Caco-2 (cell line): ENCODE measurements at regions of chr4 and their contacts with region 1.

Region 1: GRCh38 chr4:1746265-1746691 is 25.0 kb downstream of the TACC3 start:
- DNase-seq: peak; percentile 80 to 89
- H3K4me3 ChIP-seq: no peak overlapping the region
- H3K4me3 Mint-ChIP-seq: no peak overlapping the region
- H3K27ac Mint-ChIP-seq: no peak overlapping the region
- H3K4me1 ChIP-seq: 0 out of 2 replicates have a peak, but pooled peaks cover 5% of the 10 kb centered on the region
- H3K4me1 Mint-ChIP-seq: no peaks in the 10 kb centered on the region
- H3K27me3 ChIP-seq: no peaks in the 10 kb centered on the region
- H3K27me3 Mint-ChIP-seq: no peaks in the 10 kb centered on the region
- CTCF ChIP-seq: peak; percentile 66 to 85

Region 2: GRCh38 chr4:1727117-1728031 is 18.9 kb before region 1 on chr4:
- CTCF ChIA-PET with region 1: no interaction called
- POLR2A ChIA-PET with region 1: no interaction called
- intact Hi-C with region 1: no loop called
- DNase-seq: no peak
- H3K4me3 ChIP-seq: no peak overlapping the region
- H3K4me3 Mint-ChIP-seq: no peak overlapping the region
- H3K27ac Mint-ChIP-seq: no peak overlapping the region
- H3K4me1 ChIP-seq: peaks cover 6% of the 10 kb centered on the region; the same call in 1 of the 2 replicates
- H3K4me1 Mint-ChIP-seq: peaks cover 8% of the 10 kb centered on the region
- H3K27me3 ChIP-seq: no peaks in the 10 kb centered on the region
- H3K27me3 Mint-ChIP-seq: no peaks in the 10 kb centered on the region
- CTCF ChIP-seq: no peak

Region 3: DNA sequence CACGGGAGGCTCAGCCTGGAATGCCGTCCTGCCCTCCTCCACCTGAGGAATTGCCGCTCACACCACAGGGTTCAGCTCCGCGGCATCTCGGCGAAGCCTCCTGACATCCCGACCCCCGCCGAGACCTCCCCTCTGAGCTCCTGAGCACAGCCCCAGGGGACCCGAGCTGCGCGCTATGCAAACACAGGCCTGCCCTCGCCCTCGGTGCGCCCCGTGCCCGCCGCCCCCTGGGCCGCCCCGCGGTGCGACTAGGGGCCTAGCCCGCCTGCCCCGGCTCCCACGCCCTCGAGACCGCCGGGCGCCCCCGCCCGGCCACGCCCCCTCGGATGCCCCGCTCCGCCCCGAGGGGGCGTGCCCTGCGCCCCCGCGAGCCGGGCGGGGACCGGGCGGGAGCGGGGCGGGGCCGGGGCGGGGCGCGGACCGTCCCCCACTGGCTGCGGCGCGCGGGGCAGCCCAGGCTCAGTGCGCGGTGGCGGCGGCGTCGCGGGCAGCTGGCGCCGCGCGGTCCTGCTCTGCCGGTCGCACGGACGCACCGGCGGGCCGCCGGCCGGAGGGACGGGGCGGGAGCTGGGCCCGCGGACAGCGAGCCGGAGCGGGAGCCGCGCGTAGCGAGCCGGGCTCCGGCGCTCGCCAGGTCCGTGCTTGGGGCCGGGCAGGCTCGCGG is 46.7 kb after region 1 on chr4 and contains the start of gene FGFR3:
- CTCF ChIA-PET with region 1: interaction called, 11 read pairs
- POLR2A ChIA-PET with region 1: interaction called, 6 read pairs
- intact Hi-C with region 1: no loop called
- DNase-seq: peak; percentile 80 to 83
- H3K4me3 ChIP-seq: peak within 1 kb of the TSS; percentile 73
- H3K4me3 Mint-ChIP-seq: peak within 1 kb of the TSS; percentile 68
- H3K27ac Mint-ChIP-seq: no peak within 1 kb of the TSS
- H3K4me1 ChIP-seq: peaks cover 34% of the 10 kb centered on the region
- H3K4me1 Mint-ChIP-seq: peaks cover 6% of the 10 kb centered on the region
- H3K27me3 ChIP-seq: no peaks in the 10 kb centered on the region
- H3K27me3 Mint-ChIP-seq: no peaks in the 10 kb centered on the region
- CTCF ChIP-seq: no peak
- total RNA-seq, gene FGFR3: 112 and 132 TPM in 2 replicates

Region 4: GRCh38 chr4:1809754-1810511 is 63.7 kb after region 1 on chr4:
- CTCF ChIA-PET with region 1: interaction called, 23 read pairs
- POLR2A ChIA-PET with region 1: no interaction called
- intact Hi-C with region 1: loop called (anchors 1 kb)
- DNase-seq: peak; percentile 84 to 92
- H3K4me3 ChIP-seq: no peak overlapping the region
- H3K4me3 Mint-ChIP-seq: no peak overlapping the region
- H3K27ac Mint-ChIP-seq: peak overlapping the region; percentile 12
- H3K4me1 ChIP-seq: peaks cover 4% of the 10 kb centered on the region; the same call in 1 of the 2 replicates
- H3K4me1 Mint-ChIP-seq: no peaks in the 10 kb centered on the region
- H3K27me3 ChIP-seq: no peaks in the 10 kb centered on the region
- H3K27me3 Mint-ChIP-seq: no peaks in the 10 kb centered on the region
- CTCF ChIP-seq: peak; percentile 94 to 95

Region 5: GRCh38 chr4:1899149-1900086 is 153.1 kb after region 1 on chr4:
- CTCF ChIA-PET with region 1: no interaction called
- POLR2A ChIA-PET with region 1: no interaction called
- intact Hi-C with region 1: loop called (anchors 1 kb)
- DNase-seq: peak; percentile 74 to 82
- H3K4me3 ChIP-seq: no peak overlapping the region
- H3K4me3 Mint-ChIP-seq: no peak overlapping the region
- H3K27ac Mint-ChIP-seq: no peak overlapping the region
- H3K4me1 ChIP-seq: peaks cover 16% of the 10 kb centered on the region
- H3K4me1 Mint-ChIP-seq: peaks cover 8% of the 10 kb centered on the region
- H3K27me3 ChIP-seq: no peaks in the 10 kb centered on the region
- H3K27me3 Mint-ChIP-seq: no peaks in the 10 kb centered on the region
- CTCF ChIP-seq: peak; percentile 76 to 79